IMR-90 (cell line): ENCODE measurements at regions of chr12 and their contacts with region 1.

Region 1: GRCh38 chr12:32181498-32182175 is 75.0 kb downstream of the BICD1 start:
- DNase-seq: no peak
- ATAC-seq: no peak
- H3K4me3 ChIP-seq: no peak overlapping the region
- H3K27ac ChIP-seq: no peak overlapping the region
- H3K4me1 ChIP-seq: peaks cover 6% of the 10 kb centered on the region
- H3K27me3 ChIP-seq: no peaks in the 10 kb centered on the region
- CTCF ChIP-seq: no peak
- POLR2A ChIP-seq: no peak
- RAD21 ChIP-seq: no peak

Region 2: GRCh38 chr12:31868965-31869364 is 312.7 kb before region 1 on chr12:
- CTCF ChIA-PET with region 1: no interaction called
- POLR2A ChIA-PET with region 1: no interaction called
- dilution Hi-C with region 1: no loop called
- in situ Hi-C with region 1: no loop called
- intact Hi-C with region 1: no loop called
- DNase-seq: peak; percentile 20
- ATAC-seq: no peak
- H3K4me3 ChIP-seq: no peak overlapping the region
- H3K27ac ChIP-seq: no peak overlapping the region
- H3K4me1 ChIP-seq: no peaks in the 10 kb centered on the region
- H3K27me3 ChIP-seq: peaks cover 4% of the 10 kb centered on the region; the same call in 1 of the 2 replicates
- CTCF ChIP-seq: no peak
- POLR2A ChIP-seq: no peak
- RAD21 ChIP-seq: no peak

Region 3: GRCh38 chr12:32134189-32134888 is 47.3 kb before region 1 on chr12:
- CTCF ChIA-PET with region 1: no interaction called
- POLR2A ChIA-PET with region 1: interaction called, 10 read pairs
- dilution Hi-C with region 1: no loop called
- in situ Hi-C with region 1: no loop called
- intact Hi-C with region 1: no loop called
- DNase-seq: peak; percentile 83
- ATAC-seq: peak; percentile 65
- H3K4me3 ChIP-seq: no peak overlapping the region
- H3K27ac ChIP-seq: peak overlapping the region; percentile 41; the same call in 1 of the 2 replicates
- H3K4me1 ChIP-seq: peaks cover 5% of the 10 kb centered on the region
- H3K27me3 ChIP-seq: no peaks in the 10 kb centered on the region
- CTCF ChIP-seq: no peak
- POLR2A ChIP-seq: no peak
- RAD21 ChIP-seq: no peak

Region 4: DNA sequence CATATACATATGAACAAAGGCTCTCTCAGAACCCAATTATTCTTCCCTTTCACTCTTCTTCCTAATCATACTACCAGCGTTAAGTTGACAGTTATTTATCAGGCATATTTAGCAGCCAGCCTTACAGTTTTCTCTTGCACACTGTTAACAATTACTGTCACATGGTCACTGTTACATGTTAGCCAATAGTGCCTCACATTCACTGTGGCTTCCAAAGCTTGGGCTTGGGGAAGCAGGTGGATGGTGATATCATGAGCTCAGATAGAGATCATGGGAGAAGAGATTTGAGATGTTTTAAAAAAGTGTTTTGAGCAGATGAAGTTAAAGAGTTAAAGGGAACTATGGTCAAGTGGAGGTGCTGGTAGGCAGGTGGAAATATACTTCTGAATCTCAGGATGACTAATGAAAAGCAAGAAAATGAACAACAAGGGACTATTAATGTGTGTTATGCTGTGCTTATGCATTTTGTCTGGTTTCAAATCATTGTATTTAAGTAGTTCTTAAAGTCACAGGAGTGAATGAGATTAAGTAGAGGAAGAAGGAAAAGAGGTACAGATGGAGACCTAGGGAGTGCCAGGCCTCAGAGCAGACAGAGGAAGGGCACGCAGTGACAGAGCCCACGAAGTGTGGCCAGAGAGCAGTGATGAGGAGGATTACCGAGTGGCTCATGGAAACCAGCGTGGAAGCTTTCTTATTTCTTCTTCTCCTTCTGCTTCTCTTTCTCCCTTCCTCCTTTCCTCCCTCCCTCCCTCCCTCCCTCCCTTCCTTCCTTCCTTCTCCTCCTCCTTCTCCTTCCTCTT is 35.4 kb before region 1 on chr12:
- CTCF ChIA-PET with region 1: no interaction called
- POLR2A ChIA-PET with region 1: interaction called, 10 read pairs
- dilution Hi-C with region 1: no loop called
- in situ Hi-C with region 1: no loop called
- intact Hi-C with region 1: no loop called
- DNase-seq: no peak
- ATAC-seq: no peak
- H3K4me3 ChIP-seq: no peak overlapping the region
- H3K27ac ChIP-seq: no peak overlapping the region
- H3K4me1 ChIP-seq: no peaks in the 10 kb centered on the region
- H3K27me3 ChIP-seq: no peaks in the 10 kb centered on the region
- CTCF ChIP-seq: no peak
- POLR2A ChIP-seq: no peak
- RAD21 ChIP-seq: no peak

Region 5: DNA sequence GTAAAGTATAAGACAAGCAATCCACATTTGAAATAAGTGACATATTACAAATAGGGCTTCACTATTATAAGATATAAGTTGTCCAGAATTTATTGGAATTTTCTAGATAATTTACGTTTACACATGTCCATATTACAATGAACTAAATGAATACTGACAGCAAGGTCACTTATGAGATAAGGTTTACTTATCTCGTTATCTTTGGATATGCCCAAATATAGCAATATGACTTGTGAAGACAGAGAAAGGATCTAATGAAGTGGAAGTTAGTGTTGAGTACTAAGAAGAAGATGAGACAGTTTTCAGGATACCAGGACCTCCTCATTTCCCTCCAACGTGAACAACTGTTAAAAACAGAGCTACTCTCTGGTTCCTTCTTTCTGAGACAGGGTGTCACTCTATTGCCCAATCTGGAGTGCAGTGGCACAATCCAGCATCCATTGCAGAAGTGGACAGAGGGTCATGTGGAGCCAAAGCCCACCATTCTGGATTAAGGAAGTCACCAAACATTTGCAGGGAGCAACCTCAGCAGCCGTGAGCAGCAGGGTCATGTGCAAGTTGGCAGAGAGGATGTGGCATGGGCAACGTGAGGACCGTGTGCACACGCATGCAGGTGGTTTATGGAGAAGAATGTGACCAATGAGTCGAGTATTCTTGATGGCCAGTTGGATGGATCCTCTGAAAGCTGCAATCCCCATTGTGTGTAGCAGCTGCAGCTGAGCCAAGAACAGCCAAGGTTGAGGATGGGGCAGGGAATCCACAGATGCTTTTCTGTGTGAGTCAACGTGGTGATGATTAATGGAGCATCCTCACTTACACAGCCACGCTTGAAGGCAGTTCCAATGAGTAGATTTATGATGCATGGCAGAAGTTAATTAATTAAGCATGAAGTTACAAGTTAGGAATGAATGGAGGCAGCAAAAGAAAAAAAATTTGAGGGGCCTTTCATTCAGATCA is 36.0 kb after region 1 on chr12:
- CTCF ChIA-PET with region 1: no interaction called
- POLR2A ChIA-PET with region 1: no interaction called
- dilution Hi-C with region 1: no loop called
- in situ Hi-C with region 1: no loop called
- intact Hi-C with region 1: no loop called
- DNase-seq: peak; percentile 85
- ATAC-seq: peak; percentile 87
- H3K4me3 ChIP-seq: no peak overlapping the region
- H3K27ac ChIP-seq: no peak overlapping the region
- H3K4me1 ChIP-seq: peaks cover 3% of the 10 kb centered on the region
- H3K27me3 ChIP-seq: no peaks in the 10 kb centered on the region
- CTCF ChIP-seq: no peak
- POLR2A ChIP-seq: no peak
- RAD21 ChIP-seq: no peak